Pancreas (tissue), 10 donors: ENCODE measurements at regions of chr2 and their contacts with region 1.

Region 1: GRCh38 chr2:221573430-221574230 is 1.5 kb upstream of the EPHA4 start:
- DNase-seq: peak; percentile 70 to 98 (median 88)
- ATAC-seq: peak; percentile 77 to 86 (median 80)
- H3K4me3 ChIP-seq: peak overlapping the region; percentile 44 to 79 (median 70)
- H3K27ac ChIP-seq: peak overlapping the region; percentile 2 to 80 (median 63)
- H3K4me1 ChIP-seq: no peaks in the 10 kb centered on the region
- H3K27me3 ChIP-seq: peaks cover 0 to 31% (median 10%) of the 10 kb centered on the region in 4 donors
- CTCF ChIP-seq: peak; percentile 93 to 98 (median 94)

Region 2: GRCh38 chr2:219736209-219736608 is 1837.4 kb before region 1 on chr2:
- intact Hi-C with region 1: loop called in 1 of 3 experiments (anchors 10 kb)
- DNase-seq: peak in 3 of 6 donors; percentile 8 to 29 (median 16)
- ATAC-seq: peak in 3 of 4 donors; percentile 82 to 87 (median 83)
- H3K4me3 ChIP-seq: no peak overlapping the region
- H3K27ac ChIP-seq: no peak overlapping the region
- H3K4me1 ChIP-seq: no peaks in the 10 kb centered on the region
- H3K27me3 ChIP-seq: no peaks in the 10 kb centered on the region
- CTCF ChIP-seq: peak in 3 of 4 donors; percentile 9 to 42 (median 38)

Region 3: DNA sequence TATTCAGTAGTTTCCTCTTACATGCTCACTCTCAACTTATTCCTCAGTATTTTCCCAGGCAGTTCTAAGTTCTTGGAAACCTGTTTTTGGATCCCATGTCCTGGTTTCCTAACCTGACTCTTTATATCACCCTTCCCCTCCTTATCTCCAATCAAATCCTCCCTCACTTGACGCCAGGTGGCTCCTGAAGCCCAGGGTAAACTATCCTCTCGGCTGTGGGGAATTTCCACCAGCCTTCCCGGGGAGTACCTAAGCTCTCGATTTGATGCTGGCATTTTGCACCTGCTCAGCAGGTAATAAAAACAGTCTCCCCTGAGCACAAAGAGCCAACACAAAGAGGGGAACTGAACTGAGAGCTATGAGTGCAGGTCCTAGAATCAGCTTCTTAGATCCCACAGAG is 1408.2 kb before region 1 on chr2:
- intact Hi-C with region 1: loop called in 1 of 3 experiments (anchors 10 kb)
- DNase-seq: peak in 3 of 6 donors; percentile 30 to 55 (median 52)
- ATAC-seq: peak; percentile 66 to 98 (median 88)
- H3K4me3 ChIP-seq: no peak overlapping the region
- H3K27ac ChIP-seq: no peak overlapping the region
- H3K4me1 ChIP-seq: no peaks in the 10 kb centered on the region
- H3K27me3 ChIP-seq: no peaks in the 10 kb centered on the region
- CTCF ChIP-seq: peak in 2 of 4 donors; percentile 9 to 21

Region 4: GRCh38 chr2:220687231-220687843 is 886.3 kb before region 1 on chr2:
- intact Hi-C with region 1: loop called in 2 of 3 experiments (anchors 5 kb)
- DNase-seq: peak; percentile 36 to 77 (median 60)
- ATAC-seq: peak; percentile 78 to 96 (median 90)
- H3K4me3 ChIP-seq: no peak overlapping the region
- H3K27ac ChIP-seq: no peak overlapping the region
- H3K4me1 ChIP-seq: no peaks in the 10 kb centered on the region
- H3K27me3 ChIP-seq: no peaks in the 10 kb centered on the region
- CTCF ChIP-seq: peak; percentile 64 to 82 (median 72)

Region 5: DNA sequence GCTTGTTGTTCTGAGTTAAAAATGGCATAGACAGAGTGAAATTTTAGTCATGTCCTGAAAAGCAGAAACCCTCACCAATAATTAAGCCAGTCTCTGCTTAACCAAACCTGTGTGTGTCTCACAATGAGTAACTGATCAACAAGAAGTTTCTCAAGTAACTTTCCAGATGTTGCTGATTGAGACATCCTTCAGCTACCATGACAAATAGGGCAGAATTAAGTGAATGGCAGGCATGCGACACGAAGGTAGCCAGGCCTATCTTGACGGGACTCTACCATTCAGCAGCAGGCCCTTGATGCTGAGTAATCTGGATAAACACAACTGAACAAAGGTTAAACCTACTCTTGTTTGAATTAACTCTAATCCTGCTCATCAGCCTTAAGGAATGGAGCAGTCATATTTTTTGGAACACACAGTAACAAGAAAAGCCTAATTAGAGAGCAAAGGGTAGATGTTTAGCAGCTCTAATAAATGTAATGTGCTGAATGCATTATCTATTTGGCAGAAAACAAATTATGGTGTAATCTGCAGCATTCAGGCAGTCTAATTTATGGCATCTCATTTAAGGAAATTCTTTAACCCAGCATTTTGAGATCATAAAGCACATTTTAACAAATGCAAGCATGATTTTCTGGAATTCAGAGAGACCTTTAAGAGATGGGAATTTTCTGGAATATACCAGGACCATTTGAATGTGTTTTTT is 158.0 kb after region 1 on chr2:
- intact Hi-C with region 1: no loop called
- DNase-seq: no peak
- ATAC-seq: no peak
- H3K4me3 ChIP-seq: no peak overlapping the region
- H3K27ac ChIP-seq: no peak overlapping the region
- H3K4me1 ChIP-seq: no peaks in the 10 kb centered on the region
- H3K27me3 ChIP-seq: no peaks in the 10 kb centered on the region
- CTCF ChIP-seq: no peak

Region 6: GRCh38 chr2:221972813-221973463 is 399.3 kb after region 1 on chr2:
- intact Hi-C with region 1: loop called in 1 of 3 experiments (anchors 10 kb)
- DNase-seq: no peak
- ATAC-seq: no peak
- H3K4me3 ChIP-seq: no peak overlapping the region
- H3K27ac ChIP-seq: no peak overlapping the region
- H3K4me1 ChIP-seq: no peaks in the 10 kb centered on the region
- H3K27me3 ChIP-seq: no peaks in the 10 kb centered on the region
- CTCF ChIP-seq: no peak